ENCODE measurements at regions of chr10 and their contacts with region 1.

Region 1: GRCh38 chr10:132001238-132001972 is 19.7 kb upstream of the BNIP3 start:
- DNase-seq: peak; percentile 43
- ATAC-seq: peak; percentile 54
- H3K4me3 ChIP-seq: no peak overlapping the region
- H3K27ac ChIP-seq: no peak overlapping the region
- H3K4me1 ChIP-seq: peaks cover 7% of the 10 kb centered on the region; the same call in 1 of the 2 replicates
- H3K27me3 ChIP-seq: no peaks in the 10 kb centered on the region
- CTCF ChIP-seq: peak; percentile 42; the same call in 1 of the 2 replicates

Region 2: GRCh38 chr10:132142411-132143161 is 141.2 kb after region 1 on chr10:
- CTCF ChIA-PET with region 1: no interaction called
- POLR2A ChIA-PET with region 1: interaction called, 5 read pairs
- intact Hi-C with region 1: loop called (anchors 5 kb)
- DNase-seq: peak; percentile 55
- ATAC-seq: peak; percentile 90
- H3K4me3 ChIP-seq: no peak overlapping the region
- H3K27ac ChIP-seq: no peak overlapping the region
- H3K4me1 ChIP-seq: no peaks in the 10 kb centered on the region
- H3K27me3 ChIP-seq: no peaks in the 10 kb centered on the region
- CTCF ChIP-seq: peak; percentile 66

Measured in PC-3 (cell line).